HEK293 (cell line): ENCODE measurements at regions of chrX and their contacts with region 1.

Region 1: GRCh38 chrX:72018277-72019112 is 107.8 kb downstream of the NHSL2 start:
- H3K4me3 ChIP-seq: no peak overlapping the region
- H3K27ac ChIP-seq: no peak overlapping the region
- H3K4me1 ChIP-seq: no peaks in the 10 kb centered on the region
- CTCF ChIP-seq: no peak; the same call in 1 of the 2 replicates

Region 2: GRCh38 chrX:71910986-71911730 is 107.3 kb before region 1 on chrX:
- CTCF ChIA-PET with region 1: interaction called, 16 read pairs
- POLR2A ChIA-PET with region 1: no interaction called
- H3K4me3 ChIP-seq: peak overlapping the region; percentile 31
- H3K27ac ChIP-seq: peak overlapping the region; percentile 53; the same call in 1 of the 2 replicates
- H3K4me1 ChIP-seq: no peaks in the 10 kb centered on the region
- CTCF ChIP-seq: peak; percentile 67; the same call in 1 of the 2 replicates

Region 3: GRCh38 chrX:71998836-71999509 is 19.5 kb before region 1 on chrX:
- CTCF ChIA-PET with region 1: interaction called, 174 read pairs
- POLR2A ChIA-PET with region 1: no interaction called
- H3K4me3 ChIP-seq: no peak overlapping the region
- H3K27ac ChIP-seq: no peak overlapping the region
- H3K4me1 ChIP-seq: no peaks in the 10 kb centered on the region
- CTCF ChIP-seq: no peak

Region 4: DNA sequence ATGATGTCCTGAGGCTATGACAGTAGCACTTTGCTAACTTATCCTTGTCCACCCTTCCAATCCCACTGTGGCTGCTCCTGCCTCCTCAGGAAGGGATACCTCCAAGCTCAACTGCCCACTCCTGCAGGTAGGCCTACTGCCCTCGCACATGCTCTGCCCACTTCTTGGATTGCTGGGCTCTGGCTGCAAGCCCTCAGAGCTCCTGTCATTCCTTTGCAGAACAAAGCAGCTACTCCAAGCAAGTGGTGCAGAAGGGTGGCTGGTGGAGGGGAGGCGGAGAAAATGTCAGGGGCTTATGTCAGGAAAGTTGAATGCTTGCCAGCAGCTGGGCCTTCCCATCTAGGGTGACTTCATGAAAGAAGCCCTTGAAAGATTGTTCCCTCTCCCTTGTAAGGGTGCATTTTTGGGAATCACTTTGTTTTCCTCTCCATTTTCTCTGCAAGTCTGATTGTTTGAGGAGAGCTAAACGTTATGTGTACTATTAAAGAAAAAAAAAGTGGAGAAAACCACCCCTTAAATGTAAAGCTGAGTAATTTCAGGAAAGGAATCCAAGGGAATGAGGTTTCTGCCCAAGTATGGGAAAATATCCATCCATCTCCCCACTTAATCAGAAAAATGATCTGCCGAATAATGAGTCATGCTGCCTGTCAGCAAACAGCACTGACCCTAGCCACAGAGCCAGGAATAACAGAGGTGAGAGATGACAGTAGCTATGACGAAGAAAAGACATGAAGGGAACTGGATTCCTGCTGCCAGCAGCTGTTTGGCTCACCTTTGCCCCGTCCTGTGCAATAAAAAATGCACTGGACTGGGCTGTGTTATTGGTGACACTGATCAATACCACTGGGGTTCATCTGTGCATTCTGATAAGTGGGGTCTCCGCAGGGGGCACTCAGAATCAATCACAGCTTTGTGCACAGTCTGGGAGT is 11.3 kb after region 1 on chrX:
- CTCF ChIA-PET with region 1: interaction called, 81 read pairs
- POLR2A ChIA-PET with region 1: no interaction called
- H3K4me3 ChIP-seq: no peak overlapping the region
- H3K27ac ChIP-seq: no peak overlapping the region
- H3K4me1 ChIP-seq: no peaks in the 10 kb centered on the region
- CTCF ChIP-seq: no peak

Region 5: GRCh38 chrX:72041871-72042851 is 23.7 kb after region 1 on chrX:
- CTCF ChIA-PET with region 1: interaction called, 13 read pairs
- POLR2A ChIA-PET with region 1: interaction called, 3 read pairs
- H3K4me3 ChIP-seq: no peak overlapping the region
- H3K27ac ChIP-seq: no peak overlapping the region
- H3K4me1 ChIP-seq: no peaks in the 10 kb centered on the region
- CTCF ChIP-seq: no peak